PC-3 (cell line): ENCODE measurements at regions of chr11 and their contacts with region 1.

Region 1: GRCh38 chr11:20060181-20060580 is 100.1 kb downstream of the DBX1 start:
- DNase-seq: no peak
- ATAC-seq: no peak
- H3K4me3 ChIP-seq: no peak overlapping the region
- H3K27ac ChIP-seq: no peak overlapping the region
- H3K4me1 ChIP-seq: no peaks in the 10 kb centered on the region
- H3K27me3 ChIP-seq: no peaks in the 10 kb centered on the region
- CTCF ChIP-seq: no peak

Region 2: DNA sequence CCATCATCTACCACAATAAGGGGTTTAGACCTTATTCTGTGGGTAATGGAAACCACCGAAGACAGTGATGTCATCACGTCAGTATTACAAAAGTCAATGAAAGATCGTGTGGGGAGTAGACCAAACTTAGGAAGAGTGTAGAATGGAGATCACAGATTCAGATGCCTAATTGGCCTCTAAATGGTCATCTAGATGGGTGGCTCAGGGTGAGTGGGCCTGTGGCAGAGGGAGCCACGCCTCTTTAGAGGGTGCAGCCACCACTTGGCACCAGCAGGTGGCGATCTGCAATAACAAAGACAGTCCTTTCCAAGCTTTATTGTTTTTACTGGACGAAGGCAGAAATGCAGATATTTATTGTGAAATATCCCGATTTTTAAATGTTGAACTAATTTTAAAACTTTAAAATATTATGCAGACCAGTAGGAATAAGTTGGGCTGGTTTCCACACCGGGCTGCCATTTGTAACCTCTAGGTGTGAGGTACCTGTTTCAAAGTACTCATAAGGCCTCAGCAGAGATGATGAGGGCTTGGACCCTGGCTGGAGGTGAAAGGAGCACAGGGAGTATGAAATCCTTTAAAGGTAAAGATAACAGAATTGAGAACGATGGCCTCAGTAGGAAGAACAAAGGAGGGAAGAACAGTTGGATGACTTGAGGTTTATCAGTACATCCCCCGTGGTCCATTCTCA is 121.9 kb before region 1 on chr11:
- CTCF ChIA-PET with region 1: interaction called, 13 read pairs
- POLR2A ChIA-PET with region 1: no interaction called
- intact Hi-C with region 1: no loop called
- DNase-seq: peak; percentile 73
- ATAC-seq: peak; percentile 53
- H3K4me3 ChIP-seq: no peak overlapping the region
- H3K27ac ChIP-seq: peak overlapping the region; percentile 24; the same call in 1 of the 2 replicates
- H3K4me1 ChIP-seq: peaks cover 20% of the 10 kb centered on the region
- H3K27me3 ChIP-seq: no peaks in the 10 kb centered on the region
- CTCF ChIP-seq: peak; percentile 92